ENCODE measurements at regions of chr10 and their contacts with region 1.

Region 1: DNA sequence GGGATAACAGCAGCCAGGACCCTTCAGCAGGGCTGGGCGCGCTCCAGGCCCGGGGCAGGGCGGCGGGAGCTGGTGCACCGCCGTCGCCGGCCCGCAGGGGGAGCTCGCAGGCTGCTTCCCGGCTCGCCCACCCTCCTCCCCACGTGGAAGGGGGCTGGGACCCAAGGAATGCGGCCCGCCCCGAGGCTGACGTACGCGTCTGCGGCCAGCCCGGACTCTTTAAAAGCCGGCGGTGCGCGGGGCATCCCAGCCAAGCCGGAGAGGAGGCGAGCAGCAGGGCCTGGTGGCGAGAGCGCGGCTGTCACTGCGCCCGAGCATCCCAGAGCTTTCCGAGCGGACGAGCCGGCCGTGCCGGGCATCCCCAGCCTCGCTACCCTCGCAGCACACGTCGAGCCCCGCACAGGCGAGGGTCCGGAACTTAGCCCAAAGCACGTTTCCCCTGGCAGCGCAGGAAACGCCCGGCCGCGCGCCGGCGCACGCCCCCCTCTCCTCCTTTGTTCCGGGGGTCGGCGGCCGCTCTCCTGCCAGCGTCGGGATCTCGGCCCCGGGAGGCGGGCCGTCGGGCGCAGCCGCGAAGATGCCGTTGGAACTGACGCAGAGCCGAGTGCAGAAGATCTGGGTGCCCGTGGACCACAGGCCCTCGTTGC is at the start of gene PFKFB3:
- DNase-seq: peak; percentile 89
- H3K4me3 Mint-ChIP-seq: peak within 1 kb of the TSS; percentile 100
- H3K27ac Mint-ChIP-seq: peak within 1 kb of the TSS; percentile 93
- H3K4me1 Mint-ChIP-seq: peaks cover 31% of the 10 kb centered on the region
- H3K27me3 Mint-ChIP-seq: no peaks in the 10 kb centered on the region
- total RNA-seq, gene PFKFB3: 124 and 126 TPM in 2 replicates

Region 2: GRCh38 chr10:6108603-6109443 is 94.0 kb before region 1 on chr10:
- intact Hi-C with region 1: loop called (anchors 1 kb)
- DNase-seq: no peak
- H3K4me3 Mint-ChIP-seq: no peak overlapping the region
- H3K27ac Mint-ChIP-seq: peak overlapping the region; percentile 77
- H3K4me1 Mint-ChIP-seq: peaks cover 30% of the 10 kb centered on the region
- H3K27me3 Mint-ChIP-seq: no peaks in the 10 kb centered on the region

Region 3: DNA sequence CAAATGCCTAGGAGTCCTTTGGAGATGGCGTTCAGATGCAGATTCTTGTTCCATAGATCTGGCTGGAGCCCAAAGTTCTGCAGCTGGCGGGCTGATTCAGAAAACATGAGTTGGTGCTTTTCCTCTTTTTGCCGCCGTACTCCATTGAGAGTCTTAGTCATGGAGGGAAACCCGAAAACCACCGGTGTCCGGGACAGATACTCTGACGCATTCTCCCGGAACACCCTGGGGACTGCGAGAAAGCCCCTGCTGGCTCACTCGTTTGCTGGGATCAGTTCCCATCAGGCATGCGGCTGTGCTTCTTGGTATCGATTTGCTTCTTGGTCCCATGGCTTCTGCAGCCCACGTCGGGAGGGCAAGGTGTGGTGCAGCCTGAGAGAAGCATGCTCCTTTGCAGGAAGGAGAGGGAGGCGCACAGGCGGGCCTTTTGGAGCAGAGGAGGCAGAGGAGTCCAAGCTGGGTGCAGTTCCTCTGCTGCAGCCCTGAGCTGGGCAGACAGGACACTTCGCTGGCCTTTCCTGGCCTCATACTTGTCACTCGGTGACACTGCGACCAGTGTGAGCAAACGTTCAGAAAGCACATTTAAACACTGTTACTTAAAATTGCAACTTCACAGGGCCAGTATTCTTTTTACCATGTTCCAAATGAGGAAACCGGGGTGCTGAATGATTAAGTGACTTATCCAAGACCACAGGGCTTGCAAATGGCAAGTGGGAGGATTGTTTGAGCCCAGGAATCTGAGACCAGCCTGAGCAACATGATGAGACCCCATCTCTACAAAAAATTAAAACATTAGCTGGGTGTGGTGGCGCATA is 30.7 kb before region 1 on chr10:
- intact Hi-C with region 1: loop called (anchors 2 kb)
- DNase-seq: no peak
- H3K4me3 Mint-ChIP-seq: peak overlapping the region; percentile 23
- H3K27ac Mint-ChIP-seq: peak overlapping the region; percentile 55
- H3K4me1 Mint-ChIP-seq: peaks cover 61% of the 10 kb centered on the region
- H3K27me3 Mint-ChIP-seq: no peaks in the 10 kb centered on the region

Region 4: DNA sequence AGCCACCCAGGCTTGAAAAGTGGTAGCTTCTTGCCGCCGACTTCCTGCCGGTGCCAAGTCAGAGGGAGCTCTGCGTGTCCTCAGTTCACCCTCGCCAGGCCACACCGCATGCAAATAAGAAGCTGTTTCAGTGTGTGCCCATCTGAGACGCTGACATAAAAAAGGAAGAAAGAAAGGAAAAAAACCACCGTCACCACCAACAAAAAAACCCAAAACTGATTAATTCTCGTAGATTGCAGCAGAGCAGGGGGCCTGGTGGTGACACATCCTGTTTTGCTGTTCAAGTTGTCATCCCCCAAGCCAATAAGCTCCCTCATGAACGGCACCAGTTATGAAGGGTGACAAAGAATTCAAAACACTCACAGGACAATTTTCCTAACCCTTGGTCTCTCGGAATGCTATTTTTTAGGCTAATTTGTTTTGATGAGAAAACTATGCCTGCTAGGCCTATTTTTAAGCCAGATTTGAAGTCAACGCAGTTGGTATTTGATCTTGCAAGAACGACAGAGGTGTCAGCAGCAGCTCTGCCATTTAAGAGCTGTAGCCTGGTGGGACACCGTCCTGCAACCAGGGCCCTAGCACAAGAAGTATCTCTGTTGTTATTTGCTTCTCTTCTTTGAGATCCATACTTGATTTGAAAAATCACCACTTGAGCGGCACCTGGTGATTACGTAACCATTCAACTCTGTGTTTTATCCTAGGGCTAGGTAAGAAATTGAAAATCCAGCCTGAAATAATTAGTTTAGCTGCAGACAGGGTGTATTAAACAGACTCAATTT is 145.5 kb after region 1 on chr10:
- intact Hi-C with region 1: loop called (anchors 1 kb)
- DNase-seq: peak; percentile 67
- H3K4me3 Mint-ChIP-seq: peak overlapping the region; percentile 78
- H3K27ac Mint-ChIP-seq: peak overlapping the region; percentile 96
- H3K4me1 Mint-ChIP-seq: peaks cover 54% of the 10 kb centered on the region
- H3K27me3 Mint-ChIP-seq: no peaks in the 10 kb centered on the region

Region 5: DNA sequence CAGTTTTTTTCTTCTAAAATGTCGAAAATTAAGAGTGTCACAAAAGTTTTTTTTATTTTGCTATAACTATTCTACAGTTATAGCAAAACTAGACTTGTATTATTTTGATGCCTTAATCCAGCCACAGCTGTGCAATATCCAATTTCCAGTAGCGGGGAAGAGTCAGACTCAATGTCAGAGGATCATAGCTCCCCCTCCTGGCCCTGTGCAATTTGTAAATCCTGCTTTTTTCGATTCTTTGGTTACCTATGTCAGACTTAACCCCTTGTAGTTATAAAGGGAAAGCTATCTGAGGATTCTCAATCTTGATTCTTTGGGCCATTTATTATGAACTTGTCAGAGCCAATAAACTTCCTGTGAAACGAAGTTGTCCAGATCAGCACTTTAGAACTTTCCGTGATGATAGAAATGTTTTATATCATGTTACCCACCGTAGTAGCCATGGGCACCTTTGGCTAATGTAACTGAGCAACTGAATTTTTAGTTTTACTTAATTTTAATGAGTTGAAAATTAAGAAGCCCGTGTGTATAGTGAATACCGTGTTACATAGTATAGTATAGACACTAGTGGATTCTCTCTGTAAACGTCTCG is 465.0 kb after region 1 on chr10:
- intact Hi-C with region 1: loop called (anchors 5 kb)
- DNase-seq: no peak
- H3K4me3 Mint-ChIP-seq: no peak overlapping the region
- H3K27ac Mint-ChIP-seq: no peak overlapping the region
- H3K4me1 Mint-ChIP-seq: peaks cover 40% of the 10 kb centered on the region
- H3K27me3 Mint-ChIP-seq: no peaks in the 10 kb centered on the region

Region 6: DNA sequence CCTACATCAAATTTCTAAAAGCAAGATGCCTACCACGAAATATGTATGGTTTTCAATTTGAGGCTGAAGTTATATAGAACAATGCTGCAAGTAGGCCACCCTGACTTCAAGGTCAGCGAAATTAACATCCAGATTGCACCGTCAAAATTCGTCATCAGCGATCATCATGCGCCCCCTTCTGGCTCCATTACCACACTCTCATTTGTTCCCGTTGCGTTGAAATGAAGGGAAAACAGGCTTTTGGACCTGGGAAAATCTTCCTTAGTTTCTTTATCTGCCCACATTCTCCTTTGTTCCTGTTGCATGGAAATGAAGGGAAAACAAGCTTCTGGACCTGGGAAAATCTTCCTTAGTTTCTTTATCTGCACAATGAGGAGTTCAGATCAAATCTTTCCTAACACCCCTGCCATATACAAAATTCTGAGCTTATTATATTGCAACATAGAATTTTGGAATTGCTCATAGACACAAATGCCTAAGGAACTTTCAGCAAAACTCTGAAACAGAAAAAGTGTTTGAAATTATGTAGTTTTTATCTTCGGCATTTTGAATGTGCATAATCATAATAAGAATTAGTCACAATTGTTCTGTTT is 475.5 kb after region 1 on chr10:
- intact Hi-C with region 1: no loop called
- DNase-seq: peak; percentile 45
- H3K4me3 Mint-ChIP-seq: no peak overlapping the region
- H3K27ac Mint-ChIP-seq: no peak overlapping the region
- H3K4me1 Mint-ChIP-seq: peaks cover 21% of the 10 kb centered on the region
- H3K27me3 Mint-ChIP-seq: peaks cover 50% of the 10 kb centered on the region

Measured in activated T-helper 2 cell treated with anti-CD3 and anti-CD28 coated beads, Interferon-gamma antibody, Interleukin-2, Interleukin-4, amounts not matched to agents 10 μg/mL and 5 μg/mL and 100 μg/mL, durations not matched to agents 14 hours and 24 hours and 36 hours (primary cell).